ENCODE measurements at regions of chr4 and their contacts with region 1.

Region 1: GRCh38 chr4:168585168-168586091 is 88.6 kb downstream of the PALLD start:
- DNase-seq: peak; percentile 80 to 88 (median 83)
- ATAC-seq: peak; percentile 85 to 92 (median 87)
- H3K4me3 ChIP-seq: no peak overlapping the region
- H3K27ac ChIP-seq: peak overlapping the region in 5 of 12 donors; percentile 16 to 64 (median 52)
- H3K4me1 ChIP-seq: peaks cover 0 to 49% (median 37%) of the 10 kb centered on the region in 12 donors
- H3K27me3 ChIP-seq: no peaks in the 10 kb centered on the region
- CTCF ChIP-seq: peak; percentile 57 to 83 (median 78)
- POLR2A ChIP-seq: no peak

Region 2: DNA sequence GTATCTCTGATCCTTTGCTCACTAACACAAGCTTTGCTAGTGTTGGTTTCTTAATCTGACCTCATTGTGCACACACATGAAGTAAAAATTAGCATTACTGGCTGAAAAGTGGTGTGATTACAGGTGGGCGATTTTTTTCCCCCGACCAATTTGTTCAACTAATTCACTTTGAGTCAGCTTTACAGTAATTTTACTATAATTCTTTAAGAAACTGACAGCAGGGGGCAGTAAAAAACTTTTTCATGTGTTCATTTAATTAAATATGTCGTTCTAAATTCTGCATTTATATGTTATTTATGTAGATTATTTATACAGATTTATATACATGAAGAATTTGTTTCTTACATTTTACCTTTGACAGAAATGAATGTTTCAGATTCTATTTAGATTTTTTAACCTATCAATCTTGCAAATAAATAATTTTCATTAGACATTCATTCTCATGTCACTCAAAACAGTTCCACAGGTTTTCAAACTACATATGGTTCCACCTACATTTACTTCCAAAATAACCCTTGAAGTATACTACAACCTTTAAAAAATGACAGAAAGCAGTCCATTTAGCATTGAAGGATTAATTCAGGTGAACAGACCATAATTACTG is 71.1 kb before region 1 on chr4:
- intact Hi-C with region 1: loop called in 1 of 10 experiments (anchors 5 kb)
- DNase-seq: no peak
- ATAC-seq: no peak
- H3K4me3 ChIP-seq: peak overlapping the region in 1 of 12 donors; percentile 25
- H3K27ac ChIP-seq: peak overlapping the region in 2 of 12 donors; percentile 60 to 65
- H3K4me1 ChIP-seq: peaks cover 0 to 47% (median 15%) of the 10 kb centered on the region in 12 donors
- H3K27me3 ChIP-seq: no peaks in the 10 kb centered on the region
- CTCF ChIP-seq: peak; percentile 25 to 66 (median 54)
- POLR2A ChIP-seq: no peak

Region 3: DNA sequence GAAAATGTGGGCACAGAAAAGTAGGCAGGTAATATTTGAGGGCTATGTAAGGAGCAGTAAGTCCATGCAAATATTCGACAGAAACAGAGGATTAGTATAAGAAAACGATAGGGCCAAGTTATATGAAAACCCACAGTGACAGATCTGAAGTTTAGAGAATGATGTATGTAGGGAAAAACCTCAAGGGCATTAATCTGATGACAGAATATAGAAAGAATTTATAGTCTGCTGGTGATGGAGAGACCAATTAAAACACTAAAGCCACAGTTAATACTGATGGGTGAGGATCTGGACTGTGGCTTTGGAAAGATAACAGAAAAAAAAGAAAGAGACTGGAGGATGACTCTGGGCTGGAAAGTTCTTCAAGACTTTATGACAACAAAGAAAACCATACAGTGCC is 81.1 kb after region 1 on chr4:
- intact Hi-C with region 1: no loop called
- DNase-seq: no peak
- ATAC-seq: no peak
- H3K4me3 ChIP-seq: no peak overlapping the region
- H3K27ac ChIP-seq: peak overlapping the region in 2 of 12 donors; percentile 14 to 34
- H3K4me1 ChIP-seq: peaks cover 0 to 50% (median 16%) of the 10 kb centered on the region in 12 donors
- H3K27me3 ChIP-seq: no peaks in the 10 kb centered on the region
- CTCF ChIP-seq: no peak
- POLR2A ChIP-seq: no peak

Region 4: DNA sequence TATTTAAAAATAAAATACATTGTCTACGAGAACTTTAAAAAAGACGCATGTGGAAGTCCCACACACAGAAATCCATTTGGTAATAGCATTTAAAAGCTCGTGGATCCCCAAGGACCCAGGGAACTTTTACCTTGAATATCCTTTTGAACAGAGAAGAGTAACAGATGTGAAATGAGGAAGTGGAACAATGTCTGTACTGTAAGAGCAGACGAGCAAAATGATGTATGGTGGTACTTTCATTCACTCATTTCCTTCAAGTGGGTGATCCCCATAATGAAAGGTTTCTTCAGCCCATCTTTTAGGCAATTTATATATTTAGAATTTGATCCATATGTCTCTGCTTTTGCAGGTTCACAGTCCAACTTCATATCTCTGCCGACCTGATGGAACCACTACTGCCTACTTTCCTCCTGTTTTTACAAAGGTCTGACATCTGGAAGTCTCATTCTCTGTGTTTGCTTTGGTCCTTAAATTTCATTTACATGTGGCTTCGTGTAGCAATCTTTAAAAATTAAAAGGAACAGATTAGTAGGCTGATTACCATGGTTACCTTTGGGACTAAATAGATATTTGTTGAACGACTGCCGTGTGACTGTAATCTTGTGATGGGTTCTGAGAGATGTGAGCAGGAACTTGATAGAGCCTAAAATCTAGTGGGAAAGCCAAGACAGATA is 99.8 kb after region 1 on chr4:
- intact Hi-C with region 1: loop called in 7 of 10 experiments (anchors 5 to 10 kb)
- DNase-seq: no peak
- ATAC-seq: peak in 1 of 4 donors; percentile 58
- H3K4me3 ChIP-seq: no peak overlapping the region
- H3K27ac ChIP-seq: no peak overlapping the region
- H3K4me1 ChIP-seq: peaks cover 0 to 18% (median 0%) of the 10 kb centered on the region in 12 donors
- H3K27me3 ChIP-seq: no peaks in the 10 kb centered on the region
- CTCF ChIP-seq: no peak
- POLR2A ChIP-seq: no peak

Region 5: GRCh38 chr4:168710353-168710946 is 125.0 kb after region 1 on chr4:
- intact Hi-C with region 1: loop called in 1 of 10 experiments (anchors 10 kb)
- DNase-seq: peak in 3 of 5 donors; percentile 39 to 44 (median 43)
- ATAC-seq: peak; percentile 50 to 75 (median 62)
- H3K4me3 ChIP-seq: no peak overlapping the region
- H3K27ac ChIP-seq: peak overlapping the region in 8 of 12 donors; percentile 21 to 84 (median 60)
- H3K4me1 ChIP-seq: peaks cover 0 to 29% (median 19%) of the 10 kb centered on the region in 12 donors
- H3K27me3 ChIP-seq: no peaks in the 10 kb centered on the region
- CTCF ChIP-seq: peak; percentile 37 to 75 (median 61)
- POLR2A ChIP-seq: no peak

Region 6: GRCh38 chr4:168917138-168917779 is 331.8 kb after region 1 on chr4:
- intact Hi-C with region 1: loop called (anchors 2 to 10 kb)
- DNase-seq: no peak
- ATAC-seq: no peak
- H3K4me3 ChIP-seq: no peak overlapping the region
- H3K27ac ChIP-seq: peak overlapping the region in 2 of 12 donors; percentile 8 to 49
- H3K4me1 ChIP-seq: peaks cover 0 to 20% (median 2%) of the 10 kb centered on the region in 12 donors
- H3K27me3 ChIP-seq: no peaks in the 10 kb centered on the region
- CTCF ChIP-seq: peak; percentile 36 to 73 (median 60)
- POLR2A ChIP-seq: no peak